Psoas muscle (tissue), 8 donors: ENCODE measurements at regions of chr18 and their contacts with region 1.

Region 1: DNA sequence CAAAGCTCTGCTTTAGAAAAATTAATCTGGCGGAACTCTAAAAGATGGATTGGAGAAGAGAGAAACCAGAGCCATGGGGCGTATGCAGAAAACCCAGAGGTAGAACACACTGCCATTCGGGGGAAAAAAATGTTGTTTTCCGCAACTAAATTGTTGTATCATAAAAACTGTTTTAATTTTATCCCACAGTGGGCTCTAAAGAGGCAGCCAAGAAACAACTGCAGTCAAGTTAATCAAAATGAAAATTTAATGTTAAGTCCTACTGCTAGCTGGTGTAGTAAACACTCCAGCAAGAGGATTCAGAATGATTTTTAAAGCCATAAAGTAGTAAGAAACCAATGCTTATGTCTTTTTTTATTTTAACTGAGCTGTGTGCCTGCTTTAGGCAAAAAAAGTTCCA is 69.1 kb downstream of the GAREM1 start:
- DNase-seq: no peak
- ATAC-seq: no peak
- H3K4me3 ChIP-seq: no peak overlapping the region
- H3K27ac ChIP-seq: no peak overlapping the region
- H3K4me1 ChIP-seq: no peaks in the 10 kb centered on the region
- H3K27me3 ChIP-seq: no peaks in the 10 kb centered on the region
- CTCF ChIP-seq: no peak

Region 2: DNA sequence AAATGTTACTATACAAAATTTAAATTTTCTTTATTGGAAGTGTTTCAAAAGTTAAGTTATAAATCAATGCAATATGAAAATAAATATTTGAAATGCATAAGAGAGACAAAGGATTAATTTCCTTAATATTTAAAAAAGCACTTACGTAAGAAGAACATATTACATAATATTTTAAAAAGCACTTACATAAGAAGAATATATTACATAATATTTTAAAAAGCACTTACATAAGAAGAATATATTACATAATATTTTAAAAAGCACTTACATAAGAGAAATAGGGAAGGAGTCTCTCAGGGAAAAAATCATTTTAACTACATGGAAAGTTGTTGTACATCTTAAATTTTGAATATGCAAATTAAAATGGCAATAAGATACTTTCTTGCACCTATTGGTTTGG is 699.9 kb before region 1 on chr18:
- intact Hi-C with region 1: no loop called
- DNase-seq: no peak
- ATAC-seq: no peak
- H3K4me3 ChIP-seq: no peak overlapping the region
- H3K27ac ChIP-seq: no peak overlapping the region
- H3K4me1 ChIP-seq: no peaks in the 10 kb centered on the region
- H3K27me3 ChIP-seq: no peaks in the 10 kb centered on the region
- CTCF ChIP-seq: no peak

Region 3: GRCh38 chr18:32366586-32367538 is 34.8 kb before region 1 on chr18:
- intact Hi-C with region 1: loop called in 1 of 2 experiments (anchors 2 kb)
- DNase-seq: no peak
- ATAC-seq: no peak
- H3K4me3 ChIP-seq: no peak overlapping the region
- H3K27ac ChIP-seq: no peak overlapping the region
- H3K4me1 ChIP-seq: no peaks in the 10 kb centered on the region
- H3K27me3 ChIP-seq: no peaks in the 10 kb centered on the region
- CTCF ChIP-seq: no peak

Region 4: DNA sequence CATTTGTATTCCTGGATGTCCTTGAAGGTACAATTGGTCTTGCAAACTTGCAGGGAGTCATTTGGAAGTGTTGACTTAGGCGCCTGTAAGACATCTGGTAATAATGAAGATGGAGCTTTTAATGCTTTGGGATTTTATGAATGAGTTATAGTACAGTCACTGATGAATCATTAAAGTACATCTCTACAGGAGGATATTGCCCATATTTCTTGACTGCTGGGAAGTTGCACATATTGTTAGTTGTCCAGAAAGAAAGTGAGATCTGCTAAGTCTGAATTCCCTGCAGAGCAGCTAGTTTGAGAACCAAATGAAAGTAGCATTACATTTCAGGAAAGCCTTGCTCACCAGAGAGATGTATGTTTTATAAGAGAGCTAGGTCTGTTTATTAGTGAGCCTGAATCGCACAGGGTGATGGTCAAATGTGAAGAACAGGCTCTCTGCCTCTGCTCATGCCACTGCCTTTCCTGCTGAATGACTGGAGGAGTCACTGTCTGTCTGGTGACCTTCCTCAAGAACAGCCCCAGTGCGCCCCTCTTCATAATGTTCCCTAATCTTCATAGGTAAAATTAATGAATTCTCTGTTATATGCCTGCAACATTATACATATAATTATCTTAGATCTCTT is 510.2 kb after region 1 on chr18:
- intact Hi-C with region 1: no loop called
- DNase-seq: no peak
- ATAC-seq: no peak
- H3K4me3 ChIP-seq: no peak overlapping the region
- H3K27ac ChIP-seq: no peak overlapping the region
- H3K4me1 ChIP-seq: no peaks in the 10 kb centered on the region
- H3K27me3 ChIP-seq: no peaks in the 10 kb centered on the region
- CTCF ChIP-seq: no peak